Activated naive CD4-positive, alpha-beta T cell treated with anti-CD3 and anti-CD28 coated beads for 36 hours (primary cell): ENCODE measurements at regions of chr2 and their contacts with region 1.

Region 1: DNA sequence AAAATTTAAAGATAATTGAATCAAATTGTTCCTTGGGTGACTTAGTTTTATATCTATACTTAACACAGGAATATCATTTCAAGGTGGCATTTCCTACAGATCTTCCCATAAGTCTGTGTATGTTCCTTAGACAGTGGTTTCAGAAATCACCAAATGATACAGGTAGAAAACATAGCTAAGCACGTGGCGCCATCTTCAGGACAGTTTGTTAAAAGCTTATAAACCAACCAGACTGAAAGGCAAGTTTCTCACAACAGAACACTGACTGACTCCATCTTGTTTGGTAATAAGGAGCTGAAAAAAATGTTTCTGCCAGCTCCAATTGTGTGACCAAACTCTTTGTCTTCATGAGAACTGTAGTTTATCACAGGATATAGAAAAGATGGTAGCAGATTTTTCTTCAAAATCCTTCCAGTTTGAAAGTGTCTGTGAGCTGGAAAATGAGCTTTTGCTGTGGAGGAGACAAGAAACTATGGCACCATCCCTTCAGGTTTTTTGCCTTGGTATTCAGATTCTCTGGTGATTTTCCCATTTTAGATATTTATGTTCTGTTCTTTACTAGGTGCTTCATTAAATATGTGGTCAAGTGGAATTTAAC is 34.8 kb upstream of the NEUROD1 start:
- DNase-seq: peak; percentile 89
- H3K4me3 Mint-ChIP-seq: no peak overlapping the region
- H3K27ac Mint-ChIP-seq: no peak overlapping the region
- H3K4me1 Mint-ChIP-seq: no peaks in the 10 kb centered on the region
- H3K27me3 Mint-ChIP-seq: no peaks in the 10 kb centered on the region

Region 2: GRCh38 chr2:180125245-180125962 is 1589.7 kb before region 1 on chr2:
- CTCF ChIA-PET with region 1: interaction called, 4 read pairs
- intact Hi-C with region 1: loop called (anchors 1 kb)
- DNase-seq: peak; percentile 64
- H3K4me3 Mint-ChIP-seq: no peak overlapping the region
- H3K27ac Mint-ChIP-seq: no peak overlapping the region
- H3K4me1 Mint-ChIP-seq: peaks cover 3% of the 10 kb centered on the region
- H3K27me3 Mint-ChIP-seq: peaks cover 10% of the 10 kb centered on the region

Region 3: GRCh38 chr2:181430406-181431118 is 284.6 kb before region 1 on chr2:
- CTCF ChIA-PET with region 1: no interaction called
- intact Hi-C with region 1: loop called (anchors 2 kb)
- DNase-seq: peak; percentile 27
- H3K4me3 Mint-ChIP-seq: no peak overlapping the region
- H3K27ac Mint-ChIP-seq: no peak overlapping the region
- H3K4me1 Mint-ChIP-seq: peaks cover 24% of the 10 kb centered on the region
- H3K27me3 Mint-ChIP-seq: no peaks in the 10 kb centered on the region

Region 4: DNA sequence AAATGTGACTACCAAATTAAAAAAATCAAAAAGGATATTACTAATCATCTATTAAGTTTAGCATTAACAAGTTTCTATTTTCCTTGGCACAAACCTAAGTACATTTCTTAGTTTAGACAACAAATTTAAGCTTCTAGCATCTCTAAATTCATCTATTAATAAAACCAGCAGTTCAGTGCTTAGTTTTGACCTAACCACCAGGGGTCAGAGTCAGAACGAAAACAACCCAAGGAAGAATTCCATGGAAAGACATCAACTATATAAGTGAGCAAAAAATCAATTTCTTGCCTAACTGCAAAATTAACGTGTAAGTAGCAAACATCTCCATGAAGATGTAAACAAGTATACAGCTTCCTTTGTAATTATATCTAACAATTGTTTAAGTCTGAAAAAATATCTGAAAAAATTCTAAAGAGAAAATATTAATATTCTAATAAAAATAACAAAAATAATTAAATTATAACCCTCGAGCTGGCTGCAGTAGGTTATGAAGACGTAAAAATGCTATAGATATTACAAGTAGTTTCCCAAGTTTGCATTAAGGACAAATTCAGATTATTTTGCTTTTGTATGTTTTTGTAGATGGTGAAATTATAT is 141.9 kb before region 1 on chr2:
- CTCF ChIA-PET with region 1: interaction called, 46 read pairs
- intact Hi-C with region 1: loop called (anchors 1 kb)
- DNase-seq: no peak
- H3K4me3 Mint-ChIP-seq: no peak overlapping the region
- H3K27ac Mint-ChIP-seq: no peak overlapping the region
- H3K4me1 Mint-ChIP-seq: no peaks in the 10 kb centered on the region
- H3K27me3 Mint-ChIP-seq: peaks cover 4% of the 10 kb centered on the region

Region 5: DNA sequence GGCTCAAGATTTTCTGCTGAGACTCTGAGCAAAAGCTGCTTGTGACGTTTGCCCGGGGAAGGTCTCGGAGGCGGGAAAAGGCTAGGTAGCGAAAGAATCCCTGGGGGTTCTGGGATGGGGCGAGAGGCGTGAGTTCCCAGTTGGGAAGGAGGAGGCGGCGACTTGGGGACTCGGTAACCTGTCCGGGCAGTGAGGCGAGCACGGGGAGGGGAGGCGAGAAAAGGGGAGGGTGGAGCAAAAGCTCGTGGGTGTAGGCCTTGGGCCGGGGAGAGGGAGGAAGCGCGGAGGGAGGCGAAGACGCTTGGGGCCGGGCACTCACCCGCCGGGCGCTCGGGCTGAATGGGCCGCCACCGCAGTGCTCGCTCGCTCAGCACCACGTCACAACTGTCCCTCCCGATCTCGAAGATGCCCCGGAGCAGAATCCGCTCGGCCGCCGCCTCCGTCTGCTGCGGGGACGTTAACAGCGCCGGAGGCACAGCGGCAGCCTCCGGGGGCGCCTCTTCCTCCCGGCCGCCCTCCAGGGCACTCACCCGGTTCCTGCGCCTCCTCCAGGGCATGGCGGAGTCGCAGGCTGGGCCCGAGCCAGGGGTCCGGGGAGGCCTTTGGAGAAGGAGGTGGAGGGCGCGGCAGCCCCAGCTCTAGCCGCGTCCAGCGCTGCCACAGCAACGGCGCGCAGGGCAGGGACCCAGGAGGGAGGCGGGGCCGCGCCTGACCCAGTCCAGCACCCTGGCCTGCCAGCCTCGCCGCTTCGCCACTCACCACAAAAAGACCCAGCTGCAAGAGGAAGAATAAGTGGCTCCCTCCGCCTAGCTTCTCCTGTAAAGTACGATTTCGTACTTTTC is 58.5 kb before region 1 on chr2 and contains the start of gene CERKL:
- CTCF ChIA-PET with region 1: interaction called, 10 read pairs
- intact Hi-C with region 1: no loop called
- DNase-seq: peak; percentile 33
- H3K4me3 Mint-ChIP-seq: peak within 1 kb of the TSS; percentile 77
- H3K27ac Mint-ChIP-seq: no peak within 1 kb of the TSS
- H3K4me1 Mint-ChIP-seq: peaks cover 6% of the 10 kb centered on the region
- H3K27me3 Mint-ChIP-seq: peaks cover 26% of the 10 kb centered on the region
- total RNA-seq, gene CERKL: 0.14 TPM in 1 of 2 experiments, not detected in the other